Ovary (tissue), 10 donors: ENCODE measurements at regions of chr21 and their contacts with region 1.

Region 1: DNA sequence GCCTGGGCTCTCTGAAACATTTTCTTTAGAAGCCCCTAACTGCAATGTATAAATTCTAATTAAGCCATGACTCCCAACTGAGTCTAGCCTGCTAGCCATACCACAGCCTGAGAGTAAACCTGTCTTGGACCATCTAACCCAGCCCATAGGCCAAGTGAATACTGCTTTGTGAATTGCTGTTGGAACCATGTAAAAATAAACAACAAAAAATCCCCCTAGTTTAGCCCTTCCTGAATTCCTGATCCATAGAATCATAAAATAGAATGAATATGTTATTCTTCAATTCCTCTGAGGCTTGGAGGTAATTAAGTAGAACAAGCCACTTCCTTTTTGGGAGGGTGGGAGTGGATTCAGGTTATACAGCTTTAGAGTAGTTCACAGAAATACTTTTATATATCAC is 1496.4 kb downstream of the MRPL39 start:
- DNase-seq: no peak
- H3K4me3 ChIP-seq: no peak overlapping the region
- H3K27ac ChIP-seq: no peak overlapping the region
- H3K4me1 ChIP-seq: no peaks in the 10 kb centered on the region
- H3K27me3 ChIP-seq: no peaks in the 10 kb centered on the region
- CTCF ChIP-seq: no peak
- EP300 ChIP-seq: no peak
- POLR2A ChIP-seq: no peak

Region 2: DNA sequence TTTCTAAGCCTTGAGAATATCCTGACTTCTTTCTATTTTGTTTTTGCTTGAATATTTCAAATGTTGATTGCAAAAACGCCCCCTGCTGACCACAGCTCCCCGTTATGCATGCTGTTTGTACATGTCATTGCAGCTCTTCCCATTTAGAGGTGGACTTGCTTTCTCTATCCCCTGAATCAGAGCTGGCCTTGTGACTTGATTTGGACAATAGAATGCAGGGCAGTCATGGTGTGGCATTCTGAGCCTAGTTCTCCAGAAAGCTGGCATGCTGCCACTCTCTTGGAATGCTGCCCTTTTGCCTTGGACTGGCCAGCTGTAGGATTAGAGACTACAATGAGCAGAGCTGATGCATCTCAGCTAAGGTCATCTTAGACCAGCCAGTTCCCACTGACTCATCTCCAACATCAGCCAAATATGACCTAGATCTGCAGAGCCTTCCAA is 65.1 kb before region 1 on chr21:
- intact Hi-C with region 1: loop called in 1 of 4 experiments (anchors 10 kb)
- DNase-seq: peak; percentile 48 to 86 (median 76)
- H3K4me3 ChIP-seq: no peak overlapping the region
- H3K27ac ChIP-seq: no peak overlapping the region
- H3K4me1 ChIP-seq: peaks cover 4% of the 10 kb centered on the region
- H3K27me3 ChIP-seq: no peaks in the 10 kb centered on the region
- CTCF ChIP-seq: no peak
- EP300 ChIP-seq: no peak
- POLR2A ChIP-seq: no peak

Region 3: GRCh38 chr21:24163539-24163938 is 52.7 kb after region 1 on chr21:
- intact Hi-C with region 1: no loop called
- DNase-seq: no peak
- H3K4me3 ChIP-seq: no peak overlapping the region
- H3K27ac ChIP-seq: no peak overlapping the region
- H3K4me1 ChIP-seq: no peaks in the 10 kb centered on the region
- H3K27me3 ChIP-seq: no peaks in the 10 kb centered on the region
- CTCF ChIP-seq: no peak
- EP300 ChIP-seq: no peak
- POLR2A ChIP-seq: no peak